CD4-positive, alpha-beta memory T cell (primary cell): ENCODE measurements at regions of chr3 and their contacts with region 1.

Region 1: GRCh38 chr3:52339612-52340011 is 23.5 kb downstream of the DNAH1 start:
- DNase-seq: peak; percentile 64 to 82 (median 79)
- H3K4me3 ChIP-seq: no peak overlapping the region
- H3K4me3 Mint-ChIP-seq: no peak overlapping the region
- H3K27ac ChIP-seq: no peak overlapping the region
- H3K27ac Mint-ChIP-seq: peak overlapping the region in 6 of 7 donors; percentile 12 to 88 (median 52)
- H3K4me1 ChIP-seq: no peaks in the 10 kb centered on the region
- H3K4me1 Mint-ChIP-seq: peaks cover 7 to 10% (median 8%) of the 10 kb centered on the region in 4 donors
- H3K27me3 ChIP-seq: no peaks in the 10 kb centered on the region
- H3K27me3 Mint-ChIP-seq: no peaks in the 10 kb centered on the region

Region 2: GRCh38 chr3:51539291-51539941 is 800.2 kb before region 1 on chr3:
- CTCF ChIA-PET with region 1: no interaction called
- POLR2A ChIA-PET with region 1: no interaction called
- intact Hi-C with region 1: no loop called
- DNase-seq: peak; percentile 6 to 62 (median 12)
- H3K4me3 ChIP-seq: peak overlapping the region; percentile 47 to 80
- H3K4me3 Mint-ChIP-seq: peak overlapping the region; percentile 74 to 94 (median 88)
- H3K27ac ChIP-seq: peak overlapping the region; percentile 67
- H3K27ac Mint-ChIP-seq: peak overlapping the region; percentile 61 to 95 (median 90)
- H3K4me1 ChIP-seq: peaks cover 27% of the 10 kb centered on the region
- H3K4me1 Mint-ChIP-seq: peaks cover 28 to 45% (median 37%) of the 10 kb centered on the region in 4 donors
- H3K27me3 ChIP-seq: no peaks in the 10 kb centered on the region
- H3K27me3 Mint-ChIP-seq: no peaks in the 10 kb centered on the region

Region 3: GRCh38 chr3:52076896-52077780 is 262.5 kb before region 1 on chr3:
- CTCF ChIA-PET with region 1: no interaction called
- POLR2A ChIA-PET with region 1: no interaction called
- intact Hi-C with region 1: no loop called
- DNase-seq: no peak
- H3K4me3 ChIP-seq: no peak overlapping the region
- H3K4me3 Mint-ChIP-seq: no peak overlapping the region
- H3K27ac ChIP-seq: no peak overlapping the region
- H3K27ac Mint-ChIP-seq: no peak overlapping the region
- H3K4me1 ChIP-seq: no peaks in the 10 kb centered on the region
- H3K4me1 Mint-ChIP-seq: no peaks in the 10 kb centered on the region
- H3K27me3 ChIP-seq: no peaks in the 10 kb centered on the region
- H3K27me3 Mint-ChIP-seq: no peaks in the 10 kb centered on the region

Region 4: GRCh38 chr3:52123106-52123725 is 216.4 kb before region 1 on chr3:
- CTCF ChIA-PET with region 1: no interaction called
- POLR2A ChIA-PET with region 1: no interaction called
- intact Hi-C with region 1: loop called (anchors 1 kb)
- DNase-seq: peak; percentile 66 to 79 (median 70)
- H3K4me3 ChIP-seq: no peak overlapping the region
- H3K4me3 Mint-ChIP-seq: no peak overlapping the region
- H3K27ac ChIP-seq: no peak overlapping the region
- H3K27ac Mint-ChIP-seq: no peak overlapping the region
- H3K4me1 ChIP-seq: no peaks in the 10 kb centered on the region
- H3K4me1 Mint-ChIP-seq: no peaks in the 10 kb centered on the region
- H3K27me3 ChIP-seq: no peaks in the 10 kb centered on the region
- H3K27me3 Mint-ChIP-seq: no peaks in the 10 kb centered on the region

Region 5: DNA sequence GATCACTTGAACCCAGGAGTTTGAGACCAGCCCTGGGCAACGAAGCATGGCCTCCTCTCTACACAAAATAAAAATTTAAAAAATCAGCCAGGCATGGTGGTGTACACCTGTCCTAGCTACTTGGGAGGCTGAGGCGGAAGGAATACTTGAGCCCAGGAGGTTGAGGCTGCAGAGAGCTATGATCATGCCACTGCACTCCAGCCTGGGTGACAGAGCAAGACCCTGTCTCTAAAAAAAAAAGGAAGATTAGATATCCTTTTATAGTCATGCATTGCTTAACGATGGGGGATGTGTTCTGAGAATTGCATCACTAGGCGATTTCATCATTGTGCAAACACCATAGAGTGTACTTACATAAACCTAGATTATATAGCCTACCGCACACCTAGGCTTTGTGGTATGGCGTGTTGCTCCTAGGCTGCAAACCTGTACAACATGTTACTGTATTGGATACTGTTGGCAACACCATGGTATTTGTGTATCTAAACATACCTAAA is 129.0 kb before region 1 on chr3:
- CTCF ChIA-PET with region 1: interaction called, 13 read pairs
- POLR2A ChIA-PET with region 1: no interaction called
- intact Hi-C with region 1: no loop called
- DNase-seq: no peak
- H3K4me3 ChIP-seq: no peak overlapping the region
- H3K4me3 Mint-ChIP-seq: no peak overlapping the region
- H3K27ac ChIP-seq: no peak overlapping the region
- H3K27ac Mint-ChIP-seq: peak overlapping the region in 1 of 7 donors; percentile 27
- H3K4me1 ChIP-seq: peaks cover 12% of the 10 kb centered on the region
- H3K4me1 Mint-ChIP-seq: peaks cover 14 to 28% (median 16%) of the 10 kb centered on the region in 4 donors
- H3K27me3 ChIP-seq: no peaks in the 10 kb centered on the region
- H3K27me3 Mint-ChIP-seq: no peaks in the 10 kb centered on the region

Region 6: GRCh38 chr3:52238761-52239701 is 100.6 kb before region 1 on chr3 and contains the start of gene TWF2:
- CTCF ChIA-PET with region 1: interaction called, 283 read pairs
- POLR2A ChIA-PET with region 1: interaction called, 10 read pairs
- intact Hi-C with region 1: loop called (anchors 2 kb)
- DNase-seq: peak; percentile 88 to 93 (median 89)
- H3K4me3 ChIP-seq: peak within 1 kb of the TSS; percentile 83 to 93
- H3K4me3 Mint-ChIP-seq: peak within 1 kb of the TSS; percentile 93 to 99 (median 98)
- H3K27ac ChIP-seq: peak within 1 kb of the TSS; percentile 92
- H3K27ac Mint-ChIP-seq: peak within 1 kb of the TSS; percentile 82 to 98 (median 95)
- H3K4me1 ChIP-seq: peaks cover 79% of the 10 kb centered on the region
- H3K4me1 Mint-ChIP-seq: peaks cover 43 to 92% (median 68%) of the 10 kb centered on the region in 4 donors
- H3K27me3 ChIP-seq: no peaks in the 10 kb centered on the region
- H3K27me3 Mint-ChIP-seq: no peaks in the 10 kb centered on the region
- total RNA-seq, gene TWF2: 69.3 to 76.1 TPM

Region 7: DNA sequence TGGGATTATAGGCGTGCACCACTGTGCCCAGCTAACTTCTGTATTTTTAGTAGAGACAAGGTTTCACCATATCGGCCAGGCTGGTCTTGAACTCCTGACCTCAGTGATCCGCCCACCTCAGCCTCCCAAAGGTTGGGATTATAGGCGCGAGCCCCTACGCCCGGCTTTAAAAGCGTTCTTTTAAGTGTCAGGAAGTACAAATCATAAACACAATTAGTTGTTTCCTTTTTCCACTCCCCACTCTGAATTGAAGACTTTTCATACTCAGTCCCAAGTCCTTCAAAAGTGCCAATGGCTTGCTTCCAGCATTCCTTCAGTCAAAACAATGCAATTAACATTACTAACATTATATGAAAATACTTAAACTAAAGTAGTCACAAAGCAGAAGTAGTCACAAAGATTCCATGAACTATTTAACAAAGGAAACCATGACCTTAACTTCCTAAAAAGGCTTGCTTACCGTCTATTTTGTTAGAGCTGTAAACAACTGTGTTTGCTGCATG is 69.3 kb before region 1 on chr3:
- CTCF ChIA-PET with region 1: interaction called, 11 read pairs
- POLR2A ChIA-PET with region 1: no interaction called
- intact Hi-C with region 1: loop called (anchors 5 kb)
- DNase-seq: no peak
- H3K4me3 ChIP-seq: peak overlapping the region in 1 of 2 donors; percentile 47
- H3K4me3 Mint-ChIP-seq: peak overlapping the region; percentile 84 to 99 (median 92)
- H3K27ac ChIP-seq: peak overlapping the region; percentile 74
- H3K27ac Mint-ChIP-seq: peak overlapping the region; percentile 95 to 100 (median 96)
- H3K4me1 ChIP-seq: peaks cover 96% of the 10 kb centered on the region
- H3K4me1 Mint-ChIP-seq: peaks cover 59 to 93% (median 75%) of the 10 kb centered on the region in 4 donors
- H3K27me3 ChIP-seq: no peaks in the 10 kb centered on the region
- H3K27me3 Mint-ChIP-seq: no peaks in the 10 kb centered on the region

Region 8: DNA sequence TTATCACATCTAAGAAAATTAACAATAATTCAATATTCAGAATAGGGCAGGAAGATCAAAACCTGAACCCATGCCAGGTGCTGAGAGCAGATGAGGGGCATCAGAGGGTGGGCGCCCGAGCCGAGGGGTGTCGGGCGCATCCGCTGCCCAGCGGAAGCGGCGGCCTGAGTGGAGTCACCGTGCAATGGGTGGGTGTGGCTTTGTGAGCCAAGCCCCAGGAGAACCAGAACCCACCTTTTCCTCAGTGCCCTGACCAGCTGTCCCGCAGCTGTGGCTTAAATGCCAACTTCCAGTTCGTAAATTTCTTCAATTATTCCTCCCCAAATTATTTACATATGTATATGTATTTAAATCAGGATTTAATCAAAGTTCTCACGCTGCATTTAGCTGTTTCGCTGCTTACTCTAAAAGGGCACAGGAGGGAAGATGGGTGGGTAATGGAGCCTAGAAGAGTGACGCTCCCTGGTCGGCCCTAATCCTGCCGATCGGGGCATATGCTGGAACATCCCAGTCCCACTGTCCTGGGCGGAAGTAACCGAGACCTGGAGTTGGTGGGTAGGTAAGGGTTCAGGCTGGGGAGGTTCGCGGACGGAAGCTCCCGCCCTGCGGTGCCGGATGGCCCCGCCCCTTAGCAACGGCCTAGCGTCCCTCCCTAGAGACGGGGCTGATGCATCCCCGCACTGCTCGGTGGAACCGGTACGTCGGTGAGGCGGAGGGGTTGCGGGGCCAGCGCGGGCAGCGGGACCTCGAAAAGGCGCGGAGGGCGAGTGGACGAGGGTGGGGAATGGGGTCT is 22.2 kb before region 1 on chr3:
- CTCF ChIA-PET with region 1: interaction called, 15 read pairs
- POLR2A ChIA-PET with region 1: no interaction called
- intact Hi-C with region 1: no loop called
- DNase-seq: peak; percentile 71 to 77 (median 74)
- H3K4me3 ChIP-seq: peak overlapping the region in 1 of 2 donors; percentile 31
- H3K4me3 Mint-ChIP-seq: peak overlapping the region; percentile 34 to 78 (median 65)
- H3K27ac ChIP-seq: peak overlapping the region; percentile 23
- H3K27ac Mint-ChIP-seq: peak overlapping the region; percentile 10 to 87 (median 82)
- H3K4me1 ChIP-seq: peaks cover 16% of the 10 kb centered on the region
- H3K4me1 Mint-ChIP-seq: peaks cover 9 to 30% (median 15%) of the 10 kb centered on the region in 4 donors
- H3K27me3 ChIP-seq: no peaks in the 10 kb centered on the region
- H3K27me3 Mint-ChIP-seq: no peaks in the 10 kb centered on the region

Region 9: GRCh38 chr3:53513556-53514190 is 1174.1 kb after region 1 on chr3:
- CTCF ChIA-PET with region 1: no interaction called
- POLR2A ChIA-PET with region 1: no interaction called
- intact Hi-C with region 1: no loop called
- DNase-seq: no peak
- H3K4me3 ChIP-seq: no peak overlapping the region
- H3K4me3 Mint-ChIP-seq: no peak overlapping the region
- H3K27ac ChIP-seq: no peak overlapping the region
- H3K27ac Mint-ChIP-seq: no peak overlapping the region
- H3K4me1 ChIP-seq: no peaks in the 10 kb centered on the region
- H3K4me1 Mint-ChIP-seq: no peaks in the 10 kb centered on the region
- H3K27me3 ChIP-seq: no peaks in the 10 kb centered on the region
- H3K27me3 Mint-ChIP-seq: peaks cover 11 to 19% of the 10 kb centered on the region in 2 donors